Activated CD4-positive, alpha-beta T cell treated with anti-CD3 and anti-CD28 coated beads for 36 hours (primary cell): ENCODE measurements at regions of chr2 and their contacts with region 1.

Region 1: DNA sequence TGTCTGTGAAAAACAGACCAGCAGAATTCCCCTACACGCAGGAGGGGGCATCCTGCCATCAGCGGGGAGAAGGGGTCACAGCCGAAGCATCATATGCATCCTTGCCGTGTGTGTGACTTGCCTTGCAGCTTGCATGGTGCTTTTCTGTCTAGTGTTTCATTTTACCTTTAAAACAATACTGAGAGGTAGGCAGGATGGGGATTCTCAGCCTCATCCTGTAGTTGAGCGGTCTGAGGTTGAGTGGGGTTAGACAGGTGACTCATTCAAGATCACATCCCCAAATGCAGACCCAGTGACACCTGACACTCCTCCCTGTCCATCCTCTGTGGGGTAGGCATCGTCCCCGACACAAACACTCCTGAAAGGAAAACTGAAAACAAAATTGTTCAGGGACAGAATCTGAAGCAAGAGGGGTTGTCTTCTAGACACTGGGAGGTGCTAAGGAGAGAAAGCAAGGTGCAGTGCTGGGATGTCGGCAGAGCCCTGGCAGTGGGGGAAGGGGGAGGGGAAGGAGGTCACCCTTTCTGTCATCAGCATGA is 7.9 kb downstream of the ARL4C start:
- DNase-seq: peak; percentile 81
- ATAC-seq: peak; percentile 71
- H3K4me3 Mint-ChIP-seq: peak overlapping the region; percentile 71
- H3K27ac Mint-ChIP-seq: peak overlapping the region; percentile 97
- H3K4me1 Mint-ChIP-seq: peaks cover 85% of the 10 kb centered on the region
- H3K27me3 Mint-ChIP-seq: no peaks in the 10 kb centered on the region

Region 2: DNA sequence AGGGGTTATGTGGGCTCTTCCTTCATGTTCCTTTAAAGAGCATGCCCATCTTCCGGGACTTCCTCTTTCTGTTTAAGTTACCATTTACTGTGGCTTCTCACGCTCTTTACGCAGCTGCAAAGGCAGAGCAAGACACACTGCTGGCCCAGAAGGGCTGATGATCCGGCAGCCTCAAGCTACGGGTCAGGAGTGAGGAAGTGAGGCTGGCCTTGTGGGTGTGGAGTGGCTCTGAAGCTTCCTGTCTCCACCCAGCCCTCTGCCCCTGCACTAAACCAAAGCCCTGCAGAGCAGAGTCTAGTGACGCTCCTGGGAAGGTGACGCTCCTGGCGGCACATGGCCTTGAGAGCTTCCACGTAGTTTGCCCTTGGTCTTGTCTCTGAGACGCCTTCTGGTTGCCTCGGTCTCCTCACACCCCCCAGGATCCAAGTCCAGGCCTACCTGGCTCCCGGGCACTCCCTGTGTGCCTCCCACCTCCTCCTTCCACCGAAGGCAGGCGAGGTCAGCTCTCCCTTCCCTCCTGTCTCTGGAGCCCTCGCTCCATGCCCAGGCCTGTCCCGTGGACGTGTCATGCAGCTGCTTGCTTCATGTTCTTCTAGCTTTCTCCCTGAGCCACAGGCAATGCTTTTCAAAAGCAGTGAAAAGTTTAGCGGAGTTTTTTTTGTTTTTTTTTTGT is 42.4 kb before region 1 on chr2:
- CTCF ChIA-PET with region 1: interaction called, 6 read pairs
- POLR2A ChIA-PET with region 1: no interaction called
- intact Hi-C with region 1: loop called in 1 of 2 experiments (anchors 1 kb)
- DNase-seq: peak; percentile 86
- ATAC-seq: peak; percentile 89
- H3K4me3 Mint-ChIP-seq: peak overlapping the region; percentile 61
- H3K27ac Mint-ChIP-seq: peak overlapping the region; percentile 94
- H3K4me1 Mint-ChIP-seq: peaks cover 93% of the 10 kb centered on the region
- H3K27me3 Mint-ChIP-seq: no peaks in the 10 kb centered on the region

Region 3: GRCh38 chr2:234451852-234452625 is 36.9 kb before region 1 on chr2:
- CTCF ChIA-PET with region 1: interaction called, 6 read pairs
- POLR2A ChIA-PET with region 1: no interaction called
- intact Hi-C with region 1: loop called (anchors 1 to 2 kb)
- DNase-seq: no peak
- ATAC-seq: peak; percentile 34
- H3K4me3 Mint-ChIP-seq: peak overlapping the region; percentile 79
- H3K27ac Mint-ChIP-seq: peak overlapping the region; percentile 93
- H3K4me1 Mint-ChIP-seq: peaks cover 85% of the 10 kb centered on the region
- H3K27me3 Mint-ChIP-seq: no peaks in the 10 kb centered on the region

Region 4: GRCh38 chr2:234478121-234478858 is 10.7 kb before region 1 on chr2:
- CTCF ChIA-PET with region 1: interaction called, 3 read pairs
- POLR2A ChIA-PET with region 1: interaction called, 7 read pairs
- intact Hi-C with region 1: loop called in 1 of 2 experiments (anchors 1 kb)
- DNase-seq: peak; percentile 69
- ATAC-seq: peak; percentile 62
- H3K4me3 Mint-ChIP-seq: no peak overlapping the region
- H3K27ac Mint-ChIP-seq: peak overlapping the region; percentile 49
- H3K4me1 Mint-ChIP-seq: peaks cover 77% of the 10 kb centered on the region
- H3K27me3 Mint-ChIP-seq: no peaks in the 10 kb centered on the region

Region 5: GRCh38 chr2:235458839-235459273 is 969.9 kb after region 1 on chr2:
- CTCF ChIA-PET with region 1: no interaction called
- POLR2A ChIA-PET with region 1: no interaction called
- intact Hi-C with region 1: no loop called
- DNase-seq: no peak
- ATAC-seq: no peak
- H3K4me3 Mint-ChIP-seq: no peak overlapping the region
- H3K27ac Mint-ChIP-seq: no peak overlapping the region
- H3K4me1 Mint-ChIP-seq: no peaks in the 10 kb centered on the region
- H3K27me3 Mint-ChIP-seq: peaks cover 29% of the 10 kb centered on the region